B cell (primary cell): ENCODE measurements at regions of chr14 and their contacts with region 1.

Region 1: GRCh38 chr14:103562429-103563225 is at the starts of genes BAG5 and COA8:
- DNase-seq: peak; percentile 95
- ATAC-seq: peak; percentile 80
- H3K4me3 ChIP-seq: peak within 1 kb of the TSS; percentile 65 to 94 (median 92)
- H3K4me3 Mint-ChIP-seq: peak within 1 kb of the TSS; percentile 89
- H3K27ac ChIP-seq: peak within 1 kb of the TSS; percentile 68 to 92
- H3K27ac Mint-ChIP-seq: peak within 1 kb of the TSS; percentile 91
- H3K4me1 ChIP-seq: peaks cover 27 to 30% of the 10 kb centered on the region in 2 donors
- H3K4me1 Mint-ChIP-seq: peaks cover 53% of the 10 kb centered on the region
- H3K27me3 ChIP-seq: no peaks in the 10 kb centered on the region
- H3K27me3 Mint-ChIP-seq: no peaks in the 10 kb centered on the region
- CTCF ChIP-seq: no peak
- total RNA-seq, gene BAG5: 31.6 and 33.3 TPM in 2 replicates
- total RNA-seq, gene COA8: 24.9 and 31.3 TPM in 2 replicates

Region 2: GRCh38 chr14:103391048-103391447 is 171.6 kb before region 1 on chr14:
- CTCF ChIA-PET with region 1: no interaction called
- POLR2A ChIA-PET with region 1: no interaction called
- intact Hi-C with region 1: loop called (anchors 5 kb)
- DNase-seq: peak; percentile 75
- ATAC-seq: peak; percentile 76
- H3K4me3 ChIP-seq: no peak overlapping the region
- H3K4me3 Mint-ChIP-seq: peak overlapping the region; percentile 16
- H3K27ac ChIP-seq: no peak overlapping the region
- H3K27ac Mint-ChIP-seq: peak overlapping the region; percentile 68
- H3K4me1 ChIP-seq: peaks cover 42 to 52% of the 10 kb centered on the region in 2 donors
- H3K4me1 Mint-ChIP-seq: peaks cover 69% of the 10 kb centered on the region
- H3K27me3 ChIP-seq: no peaks in the 10 kb centered on the region
- H3K27me3 Mint-ChIP-seq: no peaks in the 10 kb centered on the region
- CTCF ChIP-seq: peak; percentile 89

Region 3: GRCh38 chr14:103546652-103547454 is 15.8 kb before region 1 on chr14:
- CTCF ChIA-PET with region 1: interaction called, 16 read pairs
- POLR2A ChIA-PET with region 1: no interaction called
- intact Hi-C with region 1: no loop called
- DNase-seq: peak; percentile 82
- ATAC-seq: peak; percentile 83
- H3K4me3 ChIP-seq: no peak overlapping the region
- H3K4me3 Mint-ChIP-seq: no peak overlapping the region
- H3K27ac ChIP-seq: no peak overlapping the region
- H3K27ac Mint-ChIP-seq: no peak overlapping the region
- H3K4me1 ChIP-seq: peaks cover 0 to 6% of the 10 kb centered on the region in 2 donors
- H3K4me1 Mint-ChIP-seq: peaks cover 4% of the 10 kb centered on the region
- H3K27me3 ChIP-seq: peaks cover 0 to 22% (median 2%) of the 10 kb centered on the region in 4 experiments
- H3K27me3 Mint-ChIP-seq: no peaks in the 10 kb centered on the region
- CTCF ChIP-seq: peak; percentile 95

Region 4: DNA sequence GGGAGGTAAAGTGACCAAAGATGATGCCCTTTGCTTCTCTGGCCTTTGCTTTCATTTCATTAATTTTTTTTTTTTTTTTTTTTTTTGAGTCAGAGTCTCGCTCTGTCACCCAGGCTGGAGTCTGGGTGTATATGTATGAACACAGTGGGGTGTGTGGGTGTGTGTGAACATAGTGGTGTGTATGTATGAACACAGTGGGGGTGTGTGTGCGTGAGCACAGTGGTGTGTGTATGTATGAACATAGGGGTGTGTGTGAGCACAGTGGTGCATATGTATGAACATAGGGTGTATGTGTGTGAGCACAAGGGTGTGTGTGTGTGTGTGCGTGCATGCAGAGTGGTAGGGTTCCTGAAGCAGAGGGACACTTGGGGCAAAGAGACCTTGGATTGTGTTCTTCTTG is 76.0 kb after region 1 on chr14:
- CTCF ChIA-PET with region 1: no interaction called
- POLR2A ChIA-PET with region 1: no interaction called
- intact Hi-C with region 1: no loop called
- DNase-seq: peak; percentile 2
- ATAC-seq: no peak
- H3K4me3 ChIP-seq: no peak overlapping the region
- H3K4me3 Mint-ChIP-seq: no peak overlapping the region
- H3K27ac ChIP-seq: no peak overlapping the region
- H3K27ac Mint-ChIP-seq: peak overlapping the region; percentile 4
- H3K4me1 ChIP-seq: peaks cover 10 to 34% of the 10 kb centered on the region in 2 donors
- H3K4me1 Mint-ChIP-seq: peaks cover 58% of the 10 kb centered on the region
- H3K27me3 ChIP-seq: no peaks in the 10 kb centered on the region
- H3K27me3 Mint-ChIP-seq: no peaks in the 10 kb centered on the region
- CTCF ChIP-seq: no peak

Region 5: GRCh38 chr14:103679351-103679750 is 116.7 kb after region 1 on chr14:
- CTCF ChIA-PET with region 1: interaction called, 7 read pairs
- POLR2A ChIA-PET with region 1: no interaction called
- intact Hi-C with region 1: loop called (anchors 2 kb)
- DNase-seq: peak; percentile 78
- ATAC-seq: peak; percentile 97
- H3K4me3 ChIP-seq: no peak overlapping the region
- H3K4me3 Mint-ChIP-seq: no peak overlapping the region
- H3K27ac ChIP-seq: peak overlapping the region in 1 of 2 donors; percentile 59
- H3K27ac Mint-ChIP-seq: peak overlapping the region; percentile 67
- H3K4me1 ChIP-seq: peaks cover 8 to 11% of the 10 kb centered on the region in 2 donors
- H3K4me1 Mint-ChIP-seq: peaks cover 14% of the 10 kb centered on the region
- H3K27me3 ChIP-seq: no peaks in the 10 kb centered on the region
- H3K27me3 Mint-ChIP-seq: no peaks in the 10 kb centered on the region
- CTCF ChIP-seq: peak; percentile 77

Region 6: DNA sequence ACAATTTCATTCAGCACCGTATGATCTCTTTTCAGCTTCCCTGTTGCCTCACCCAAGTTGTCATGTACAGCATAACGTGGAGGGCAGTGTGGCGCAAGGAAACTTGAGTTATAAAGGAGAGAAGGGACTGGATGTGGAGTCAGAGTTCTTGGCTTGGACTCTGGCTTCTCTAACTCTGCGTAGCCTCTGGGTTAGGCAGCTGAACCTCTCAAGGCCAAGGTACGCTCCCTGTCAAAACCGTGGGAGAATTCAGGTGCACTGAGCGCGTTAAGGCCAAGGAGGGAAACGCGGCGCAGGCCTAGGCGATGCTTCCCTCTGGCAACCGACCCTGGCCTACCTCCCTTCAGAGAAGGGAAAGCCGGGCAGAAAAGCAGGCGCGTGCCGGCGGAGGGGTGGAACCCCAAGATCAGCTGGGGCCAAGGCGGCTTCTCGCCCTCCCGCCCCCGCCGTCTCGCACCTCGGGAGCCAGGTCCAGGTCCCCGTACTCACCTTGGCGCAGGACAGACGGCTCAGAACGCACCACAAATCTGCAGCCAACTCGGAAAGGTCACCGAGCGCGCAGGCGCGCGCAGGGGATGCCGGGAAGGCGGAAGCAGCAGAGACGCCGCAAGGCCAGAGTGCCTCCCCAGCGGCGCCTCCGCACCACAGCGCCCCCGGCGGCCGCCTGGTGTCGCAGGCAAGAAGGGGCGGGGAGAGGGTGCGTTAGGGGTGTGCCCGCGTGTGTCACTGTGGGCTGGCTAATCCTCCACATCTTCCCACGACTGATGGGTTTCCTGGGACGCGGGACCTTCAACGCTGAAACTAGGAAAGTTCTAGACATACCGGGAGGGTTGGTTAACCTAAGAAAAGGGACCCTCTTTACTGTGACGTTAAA is 358.6 kb after region 1 on chr14:
- CTCF ChIA-PET with region 1: no interaction called
- POLR2A ChIA-PET with region 1: no interaction called
- intact Hi-C with region 1: loop called (anchors 2 kb)
- DNase-seq: peak; percentile 95
- ATAC-seq: peak; percentile 100
- H3K4me3 ChIP-seq: peak overlapping the region; percentile 62 to 92 (median 84)
- H3K4me3 Mint-ChIP-seq: peak overlapping the region; percentile 90
- H3K27ac ChIP-seq: peak overlapping the region; percentile 39 to 77
- H3K27ac Mint-ChIP-seq: peak overlapping the region; percentile 77
- H3K4me1 ChIP-seq: peaks cover 6 to 12% of the 10 kb centered on the region in 2 donors
- H3K4me1 Mint-ChIP-seq: peaks cover 15% of the 10 kb centered on the region
- H3K27me3 ChIP-seq: peaks cover 0 to 5% (median 1%) of the 10 kb centered on the region in 4 experiments
- H3K27me3 Mint-ChIP-seq: no peaks in the 10 kb centered on the region
- CTCF ChIP-seq: peak; percentile 95